ENCODE measurements at regions of chr15 and their contacts with region 1.

Region 1: DNA sequence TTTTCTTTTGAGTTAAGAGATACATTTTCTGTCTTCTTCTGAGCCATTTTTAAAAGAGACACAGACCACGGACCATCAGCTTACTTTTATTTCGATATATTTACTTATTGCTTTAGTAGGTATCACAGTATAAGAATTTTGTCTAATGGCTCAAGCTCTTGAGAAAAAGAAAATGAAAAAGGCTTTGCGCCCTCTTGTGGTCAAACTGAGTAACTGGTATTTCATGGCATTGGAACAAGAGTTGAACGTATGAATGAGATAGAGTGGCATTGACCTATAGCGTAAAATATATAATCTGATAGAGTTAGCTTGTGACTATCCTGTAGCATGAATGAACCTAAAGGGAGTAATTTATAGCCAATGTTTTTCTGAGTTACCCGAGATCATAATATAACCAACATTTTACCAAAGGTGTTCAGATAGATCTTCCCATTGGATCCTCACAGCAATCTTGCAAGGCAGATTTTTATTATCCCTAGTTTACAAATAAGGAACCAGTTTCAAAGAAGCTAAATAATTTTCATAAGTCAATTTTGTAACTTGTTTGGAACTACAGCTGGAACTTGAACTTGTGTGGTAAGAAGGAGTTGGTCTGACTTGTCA is 154.6 kb downstream of the POLR2M start:
- DNase-seq: peak in 4 of 5 donors; percentile 37 to 56 (median 41)
- H3K4me3 ChIP-seq: no peak overlapping the region
- H3K4me3 Mint-ChIP-seq: no peak overlapping the region
- H3K27ac ChIP-seq: no peak overlapping the region
- H3K27ac Mint-ChIP-seq: no peak overlapping the region
- H3K4me1 ChIP-seq: no peaks in the 10 kb centered on the region
- H3K4me1 Mint-ChIP-seq: peaks cover 0 to 4% (median 2%) of the 10 kb centered on the region in 4 donors
- H3K27me3 ChIP-seq: no peaks in the 10 kb centered on the region
- H3K27me3 Mint-ChIP-seq: peaks cover 8 to 12% of the 10 kb centered on the region in 2 donors

Region 2: GRCh38 chr15:57485869-57486268 is 375.3 kb before region 1 on chr15:
- CTCF ChIA-PET with region 1: no interaction called
- POLR2A ChIA-PET with region 1: no interaction called
- intact Hi-C with region 1: no loop called
- DNase-seq: no peak
- H3K4me3 ChIP-seq: no peak overlapping the region
- H3K4me3 Mint-ChIP-seq: no peak overlapping the region
- H3K27ac ChIP-seq: no peak overlapping the region
- H3K27ac Mint-ChIP-seq: no peak overlapping the region
- H3K4me1 ChIP-seq: no peaks in the 10 kb centered on the region
- H3K4me1 Mint-ChIP-seq: no peaks in the 10 kb centered on the region
- H3K27me3 ChIP-seq: no peaks in the 10 kb centered on the region
- H3K27me3 Mint-ChIP-seq: peaks cover 16 to 21% of the 10 kb centered on the region in 2 donors

Region 3: GRCh38 chr15:57561041-57561711 is 300.0 kb before region 1 on chr15:
- CTCF ChIA-PET with region 1: interaction called, 57 read pairs
- POLR2A ChIA-PET with region 1: no interaction called
- intact Hi-C with region 1: loop called (anchors 1 kb)
- DNase-seq: peak; percentile 60 to 65 (median 62)
- H3K4me3 ChIP-seq: no peak overlapping the region
- H3K4me3 Mint-ChIP-seq: peak overlapping the region in 7 of 8 donors; percentile 14 to 64 (median 55)
- H3K27ac ChIP-seq: no peak overlapping the region
- H3K27ac Mint-ChIP-seq: peak overlapping the region in 4 of 7 donors; percentile 11 to 59 (median 38)
- H3K4me1 ChIP-seq: peaks cover 24% of the 10 kb centered on the region
- H3K4me1 Mint-ChIP-seq: peaks cover 25 to 43% (median 32%) of the 10 kb centered on the region in 4 donors
- H3K27me3 ChIP-seq: no peaks in the 10 kb centered on the region
- H3K27me3 Mint-ChIP-seq: peaks cover 0 to 1% of the 10 kb centered on the region in 2 donors

Region 4: GRCh38 chr15:57667171-57667849 is 193.8 kb before region 1 on chr15:
- CTCF ChIA-PET with region 1: interaction called, 18 read pairs
- POLR2A ChIA-PET with region 1: no interaction called
- intact Hi-C with region 1: no loop called
- DNase-seq: no peak
- H3K4me3 ChIP-seq: no peak overlapping the region
- H3K4me3 Mint-ChIP-seq: no peak overlapping the region
- H3K27ac ChIP-seq: no peak overlapping the region
- H3K27ac Mint-ChIP-seq: no peak overlapping the region
- H3K4me1 ChIP-seq: no peaks in the 10 kb centered on the region
- H3K4me1 Mint-ChIP-seq: no peaks in the 10 kb centered on the region
- H3K27me3 ChIP-seq: no peaks in the 10 kb centered on the region
- H3K27me3 Mint-ChIP-seq: peaks cover 2 to 11% of the 10 kb centered on the region in 2 donors

Region 5: GRCh38 chr15:57751177-57751800 is 109.8 kb before region 1 on chr15:
- CTCF ChIA-PET with region 1: interaction called, 29 read pairs
- POLR2A ChIA-PET with region 1: no interaction called
- intact Hi-C with region 1: loop called (anchors 5 kb)
- DNase-seq: no peak
- H3K4me3 ChIP-seq: no peak overlapping the region
- H3K4me3 Mint-ChIP-seq: no peak overlapping the region
- H3K27ac ChIP-seq: no peak overlapping the region
- H3K27ac Mint-ChIP-seq: no peak overlapping the region
- H3K4me1 ChIP-seq: no peaks in the 10 kb centered on the region
- H3K4me1 Mint-ChIP-seq: no peaks in the 10 kb centered on the region
- H3K27me3 ChIP-seq: no peaks in the 10 kb centered on the region
- H3K27me3 Mint-ChIP-seq: no peaks in the 10 kb centered on the region

Region 6: DNA sequence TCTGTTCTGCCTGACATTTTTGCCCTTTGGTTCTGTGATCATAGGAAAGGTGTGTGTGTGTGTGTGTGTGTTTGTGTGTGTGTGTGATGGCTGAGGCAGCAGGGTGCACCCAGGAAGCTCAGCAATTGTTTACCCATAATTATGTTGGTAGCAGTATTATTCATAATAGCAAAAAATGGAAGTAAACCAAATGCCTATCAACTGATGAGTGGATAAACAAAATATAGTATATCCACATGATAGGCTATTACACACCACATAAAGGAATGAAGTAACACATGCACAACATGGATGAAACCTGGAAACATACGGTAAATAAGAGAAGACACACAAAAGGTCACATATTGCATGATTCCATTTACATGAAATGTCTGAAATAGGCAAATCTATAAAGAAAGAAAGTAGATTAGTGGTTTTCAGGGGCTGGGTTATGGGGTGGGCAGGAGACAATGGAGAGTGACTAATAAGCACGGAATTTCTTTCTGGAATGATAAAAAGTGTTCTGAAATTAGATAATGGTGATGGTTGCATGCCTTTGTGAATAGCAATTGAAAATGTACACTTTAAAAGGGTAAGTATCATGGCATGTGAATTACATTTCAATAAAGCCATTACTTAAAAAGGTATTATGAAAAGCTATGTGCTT is 12.6 kb after region 1 on chr15:
- CTCF ChIA-PET with region 1: interaction called, 63 read pairs
- POLR2A ChIA-PET with region 1: no interaction called
- intact Hi-C with region 1: no loop called
- DNase-seq: no peak
- H3K4me3 ChIP-seq: no peak overlapping the region
- H3K4me3 Mint-ChIP-seq: no peak overlapping the region
- H3K27ac ChIP-seq: no peak overlapping the region
- H3K27ac Mint-ChIP-seq: no peak overlapping the region
- H3K4me1 ChIP-seq: no peaks in the 10 kb centered on the region
- H3K4me1 Mint-ChIP-seq: peaks cover 0 to under 1% (median 0%) of the 10 kb centered on the region in 4 donors
- H3K27me3 ChIP-seq: peaks cover 12% of the 10 kb centered on the region
- H3K27me3 Mint-ChIP-seq: peaks cover 17 to 30% of the 10 kb centered on the region in 2 donors